GM13976 (cell line): ENCODE measurements at regions of chr19 and their contacts with region 1.

Region 1: DNA sequence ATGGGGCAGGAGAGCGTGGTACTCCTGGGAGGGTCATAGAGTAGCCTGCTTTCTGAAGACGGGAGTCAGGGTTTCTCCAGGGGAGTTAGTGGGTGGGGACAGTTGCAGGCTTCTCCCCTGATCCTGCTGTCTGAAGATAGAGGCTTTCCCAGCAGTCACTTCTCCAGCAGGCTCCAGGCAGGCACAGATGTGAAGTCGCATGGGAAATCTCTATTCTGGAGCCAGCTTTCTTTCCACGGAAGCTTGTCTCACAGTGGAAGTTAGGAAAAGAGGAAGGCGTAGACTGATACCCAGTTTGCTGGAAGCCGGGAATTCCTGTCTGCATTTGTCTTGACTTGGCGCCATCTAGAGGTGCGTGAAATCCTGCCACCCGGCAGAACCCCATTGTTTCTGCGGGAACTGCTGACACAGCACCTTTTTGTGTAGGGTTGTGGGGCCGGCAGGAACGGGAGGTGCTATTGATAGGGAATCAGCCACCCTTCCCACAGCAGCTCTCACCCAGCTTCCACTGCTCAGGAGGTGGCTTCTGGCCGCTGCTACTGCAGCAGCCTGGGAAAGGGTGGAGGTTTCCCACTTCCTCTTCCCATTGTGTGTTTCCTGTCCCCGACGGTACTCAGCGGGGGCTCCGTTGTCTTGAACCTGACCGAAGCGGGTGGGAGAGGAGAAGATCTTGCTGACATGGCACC is 28.5 kb upstream of the NPAS1 start:
- DNase-seq: peak; percentile 76
- CTCF ChIP-seq: peak; percentile 65

Region 2: GRCh38 chr19:46753420-46754155 is 237.5 kb before region 1 on chr19:
- in situ Hi-C with region 1: loop called (anchors 25 kb)
- DNase-seq: peak; percentile 81
- CTCF ChIP-seq: peak; percentile 81

Region 3: GRCh38 chr19:46850228-46851203 is 140.6 kb before region 1 on chr19 and contains the start of gene AP2S1:
- in situ Hi-C with region 1: loop called (anchors 10 kb)
- DNase-seq: peak; percentile 96
- CTCF ChIP-seq: no peak

Region 4: DNA sequence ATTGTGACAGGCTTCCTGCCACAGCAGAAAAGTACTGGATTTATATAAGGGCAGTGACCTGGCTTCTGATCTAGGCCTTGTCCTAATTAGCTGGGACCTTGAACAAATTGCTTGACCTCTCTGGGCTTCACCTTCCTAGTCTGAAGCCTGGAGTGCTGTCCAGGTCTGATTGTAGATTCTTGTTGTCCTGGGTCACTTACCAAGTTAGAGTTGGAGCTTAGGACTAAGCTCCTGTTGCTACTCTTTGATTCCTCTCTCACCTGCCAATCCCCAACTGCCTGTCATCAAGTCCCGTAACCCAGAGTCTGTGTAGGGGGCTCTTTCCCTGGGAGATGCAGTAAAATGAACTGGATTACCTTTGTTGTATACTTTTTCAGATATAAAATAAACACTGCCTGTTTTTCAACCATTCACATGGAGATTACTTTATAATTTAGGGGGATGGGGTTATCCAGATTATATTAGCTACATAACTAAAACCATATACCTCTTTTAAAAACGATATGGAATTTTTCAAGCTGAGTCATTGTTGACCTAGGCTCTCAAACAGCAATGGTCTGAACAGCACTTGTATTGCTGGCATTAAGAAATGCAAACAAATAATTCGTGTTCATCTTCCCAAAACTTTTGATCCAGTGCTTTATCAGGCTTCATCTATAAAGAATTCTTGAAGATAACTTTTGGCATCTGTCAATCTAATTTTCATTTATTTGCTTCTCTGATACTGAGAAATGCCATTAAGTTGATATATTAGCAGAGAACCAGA is 124.6 kb before region 1 on chr19:
- in situ Hi-C with region 1: no loop called
- DNase-seq: no peak
- CTCF ChIP-seq: no peak